ENCODE measurements at regions of chr1 and their contacts with region 1.

Region 1: DNA sequence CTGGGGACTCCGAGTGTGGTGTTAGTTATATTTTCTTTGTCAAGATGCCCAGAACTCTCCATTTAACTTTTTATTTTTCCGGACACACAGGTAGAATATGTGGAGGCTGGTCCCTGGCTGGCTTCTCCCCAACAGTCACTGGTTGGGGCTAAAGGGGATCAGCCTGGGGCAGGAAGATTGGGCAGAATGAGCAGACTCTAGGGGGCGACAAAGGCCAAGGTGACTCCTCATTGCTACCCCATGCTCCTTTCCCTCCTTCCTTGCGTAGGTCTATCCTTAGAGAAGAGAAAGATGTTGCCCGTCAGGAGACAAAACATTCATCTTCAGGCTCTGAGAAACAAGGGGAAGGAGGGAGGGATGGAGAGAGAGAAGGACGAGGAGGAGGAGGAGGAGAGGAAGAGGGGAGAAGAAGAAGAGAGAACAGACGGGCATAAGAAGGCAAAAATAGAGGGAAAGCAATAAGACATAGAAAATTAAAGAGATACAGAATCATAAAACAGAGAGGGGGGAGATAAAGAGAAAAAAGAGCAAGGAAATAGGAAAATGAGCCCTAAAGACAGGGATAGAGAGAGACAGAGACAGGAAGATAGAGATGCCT is 89.9 kb downstream of the FOXD2 start:
- DNase-seq: peak in 2 of 3 donors; percentile 69 to 87
- ATAC-seq: peak; percentile 85
- H3K4me3 ChIP-seq: no peak overlapping the region
- H3K4me1 ChIP-seq: no peaks in the 10 kb centered on the region
- CTCF ChIP-seq: peak; percentile 21

Region 2: GRCh38 chr1:47231301-47232186 is 296.2 kb before region 1 on chr1:
- intact Hi-C with region 1: no loop called
- DNase-seq: peak in 2 of 3 donors; percentile 33 to 46
- ATAC-seq: peak; percentile 40
- H3K4me3 ChIP-seq: no peak overlapping the region
- H3K4me1 ChIP-seq: peaks cover 11% of the 10 kb centered on the region
- CTCF ChIP-seq: no peak

Region 3: GRCh38 chr1:47624531-47624930 is 96.8 kb after region 1 on chr1:
- intact Hi-C with region 1: loop called in 1 of 2 experiments (anchors 10 kb)
- DNase-seq: peak in 2 of 3 donors; percentile 67 to 70
- ATAC-seq: peak; percentile 46
- H3K4me3 ChIP-seq: no peak overlapping the region
- H3K4me1 ChIP-seq: no peaks in the 10 kb centered on the region
- CTCF ChIP-seq: peak; percentile 36

Measured in mucosa of descending colon (tissue), 3 donors.